Endothelial cell of umbilical vein (primary cell): ENCODE measurements at regions of chr2 and their contacts with region 1.

Region 1: GRCh38 chr2:172821370-172822347 is 86.0 kb downstream of the RAPGEF4 start:
- DNase-seq: peak; percentile 92
- H3K4me3 ChIP-seq: peak overlapping the region in 2 of 3 experiments; percentile 29 to 60
- H3K27ac ChIP-seq: peak overlapping the region; percentile 80
- H3K4me1 ChIP-seq: peaks cover 18% of the 10 kb centered on the region
- H3K27me3 ChIP-seq: no peaks in the 10 kb centered on the region
- CTCF ChIP-seq: no peak
- POLR2A ChIP-seq: peak; percentile 38

Region 2: DNA sequence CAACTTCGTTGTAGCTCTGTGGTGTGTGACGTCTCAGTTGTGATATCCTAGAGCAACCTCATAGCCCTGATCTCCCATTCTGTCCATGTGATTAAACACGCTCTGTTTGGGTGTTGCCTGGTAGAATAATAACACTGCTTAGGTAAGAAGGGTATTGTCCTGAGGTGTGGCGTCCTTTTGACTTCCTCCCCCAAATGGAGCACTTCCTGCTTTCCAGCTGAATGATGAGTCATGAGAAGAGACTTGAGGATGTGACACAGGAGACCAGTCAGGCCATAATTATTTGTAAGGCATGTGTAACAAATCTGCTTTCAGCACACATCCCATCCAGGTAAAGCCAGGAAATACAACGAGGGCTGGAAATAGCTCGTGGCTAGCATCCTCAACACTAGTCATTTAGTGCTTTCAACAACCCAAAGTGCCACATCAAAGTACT is 14.7 kb after region 1 on chr2:
- CTCF ChIA-PET with region 1: interaction called, 4 read pairs
- POLR2A ChIA-PET with region 1: no interaction called
- dilution Hi-C with region 1: no loop called
- intact Hi-C with region 1: loop called (anchors 1 kb)
- DNase-seq: peak; percentile 88
- H3K4me3 ChIP-seq: no peak overlapping the region
- H3K27ac ChIP-seq: peak overlapping the region; percentile 67
- H3K4me1 ChIP-seq: peaks cover 28% of the 10 kb centered on the region
- H3K27me3 ChIP-seq: no peaks in the 10 kb centered on the region
- CTCF ChIP-seq: no peak
- POLR2A ChIP-seq: no peak

Region 3: DNA sequence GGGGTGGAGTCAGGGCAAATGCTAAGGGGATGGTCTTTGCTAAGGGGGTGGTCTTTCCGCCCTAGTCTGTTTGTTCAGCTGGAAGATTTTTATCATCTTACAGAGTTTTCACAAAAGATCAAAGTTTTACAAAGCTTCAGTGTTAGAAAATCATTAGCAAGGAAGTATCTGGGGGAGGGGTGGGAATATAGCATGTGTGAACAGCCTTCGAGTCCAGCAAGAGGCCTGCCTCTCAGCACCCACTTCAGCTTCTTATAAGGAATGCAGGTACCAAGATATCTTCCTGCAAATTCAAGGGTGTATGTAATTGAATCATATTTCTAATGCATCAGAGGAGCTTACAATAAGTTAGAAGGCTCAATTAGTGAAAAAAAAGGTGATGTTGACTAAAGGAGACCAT is 26.9 kb after region 1 on chr2:
- CTCF ChIA-PET with region 1: no interaction called
- POLR2A ChIA-PET with region 1: no interaction called
- dilution Hi-C with region 1: no loop called
- intact Hi-C with region 1: no loop called
- DNase-seq: peak; percentile 24
- H3K4me3 ChIP-seq: no peak overlapping the region
- H3K27ac ChIP-seq: no peak overlapping the region
- H3K4me1 ChIP-seq: no peaks in the 10 kb centered on the region
- H3K27me3 ChIP-seq: no peaks in the 10 kb centered on the region
- CTCF ChIP-seq: no peak
- POLR2A ChIP-seq: no peak

Region 4: GRCh38 chr2:172905937-172906811 is 84.5 kb after region 1 on chr2:
- CTCF ChIA-PET with region 1: no interaction called
- POLR2A ChIA-PET with region 1: no interaction called
- dilution Hi-C with region 1: no loop called
- intact Hi-C with region 1: no loop called
- DNase-seq: no peak
- H3K4me3 ChIP-seq: no peak overlapping the region
- H3K27ac ChIP-seq: no peak overlapping the region
- H3K4me1 ChIP-seq: no peaks in the 10 kb centered on the region
- H3K27me3 ChIP-seq: peaks cover 0 to 4% of the 10 kb centered on the region in 2 experiments
- CTCF ChIP-seq: no peak
- POLR2A ChIP-seq: no peak